ENCODE measurements at regions of chr7 and their contacts with region 1.

Region 1: GRCh38 chr7:8751557-8752231 is 318.3 kb downstream of the NXPH1 start:
- DNase-seq: no peak
- H3K4me3 ChIP-seq: no peak overlapping the region
- H3K27ac ChIP-seq: no peak overlapping the region
- H3K4me1 ChIP-seq: no peaks in the 10 kb centered on the region
- H3K27me3 ChIP-seq: no peaks in the 10 kb centered on the region
- CTCF ChIP-seq: no peak
- POLR2A ChIP-seq: no peak

Region 2: GRCh38 chr7:8714791-8715190 is 36.9 kb before region 1 on chr7:
- intact Hi-C with region 1: no loop called
- DNase-seq: no peak
- H3K4me3 ChIP-seq: no peak overlapping the region
- H3K27ac ChIP-seq: no peak overlapping the region
- H3K4me1 ChIP-seq: no peaks in the 10 kb centered on the region
- H3K27me3 ChIP-seq: no peaks in the 10 kb centered on the region
- CTCF ChIP-seq: no peak
- POLR2A ChIP-seq: no peak

Region 3: DNA sequence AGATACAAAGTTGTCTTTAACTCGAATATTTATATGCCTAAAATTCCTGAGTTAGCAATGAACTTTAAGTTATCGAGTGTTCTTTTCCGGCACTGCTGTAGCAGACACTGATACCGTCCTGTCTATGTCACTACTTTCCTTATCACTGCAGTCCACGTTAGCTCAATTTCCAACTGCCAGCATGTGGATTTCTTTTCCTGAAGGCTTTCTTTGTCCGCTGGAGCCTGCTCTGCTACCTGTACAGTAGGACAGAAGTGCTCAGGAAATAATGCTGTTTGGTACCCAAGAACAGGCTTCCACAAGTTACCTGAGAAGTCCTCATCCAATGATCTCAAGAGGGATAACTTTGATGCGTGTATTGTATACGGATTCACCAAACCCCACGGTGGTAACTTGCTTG is 11.1 kb after region 1 on chr7:
- intact Hi-C with region 1: no loop called
- DNase-seq: no peak
- H3K4me3 ChIP-seq: no peak overlapping the region
- H3K27ac ChIP-seq: no peak overlapping the region
- H3K4me1 ChIP-seq: no peaks in the 10 kb centered on the region
- H3K27me3 ChIP-seq: no peaks in the 10 kb centered on the region
- CTCF ChIP-seq: no peak
- POLR2A ChIP-seq: no peak

Region 4: DNA sequence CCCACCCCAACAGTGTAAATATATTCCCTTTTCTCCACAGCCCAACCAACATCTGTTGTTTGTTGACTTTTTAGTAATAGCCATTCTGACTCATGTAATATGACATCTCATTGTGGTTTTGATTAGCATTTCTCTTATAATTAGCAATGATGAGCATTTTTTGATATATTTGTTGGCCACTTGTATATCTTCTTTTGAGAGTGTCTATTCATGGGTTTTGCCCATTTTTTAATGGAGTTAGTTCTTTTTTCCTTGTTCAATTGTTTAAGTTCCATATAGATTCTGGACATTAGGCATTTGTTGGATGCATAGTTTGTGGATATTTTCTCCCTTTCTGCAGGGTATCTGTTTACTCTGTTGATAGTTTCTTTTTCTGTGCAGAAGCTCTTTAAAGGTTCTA is 21.8 kb after region 1 on chr7:
- intact Hi-C with region 1: no loop called
- DNase-seq: no peak
- H3K4me3 ChIP-seq: no peak overlapping the region
- H3K27ac ChIP-seq: no peak overlapping the region
- H3K4me1 ChIP-seq: no peaks in the 10 kb centered on the region
- H3K27me3 ChIP-seq: no peaks in the 10 kb centered on the region
- CTCF ChIP-seq: no peak
- POLR2A ChIP-seq: no peak

Region 5: GRCh38 chr7:10343108-10343507 is 1591.4 kb after region 1 on chr7:
- intact Hi-C with region 1: loop called (anchors 5 kb)
- DNase-seq: no peak
- H3K4me3 ChIP-seq: no peak overlapping the region
- H3K27ac ChIP-seq: no peak overlapping the region
- H3K4me1 ChIP-seq: no peaks in the 10 kb centered on the region
- H3K27me3 ChIP-seq: no peaks in the 10 kb centered on the region
- CTCF ChIP-seq: no peak
- POLR2A ChIP-seq: no peak